IMR-90 (cell line): ENCODE measurements at regions of chr7 and their contacts with region 1.

Region 1: DNA sequence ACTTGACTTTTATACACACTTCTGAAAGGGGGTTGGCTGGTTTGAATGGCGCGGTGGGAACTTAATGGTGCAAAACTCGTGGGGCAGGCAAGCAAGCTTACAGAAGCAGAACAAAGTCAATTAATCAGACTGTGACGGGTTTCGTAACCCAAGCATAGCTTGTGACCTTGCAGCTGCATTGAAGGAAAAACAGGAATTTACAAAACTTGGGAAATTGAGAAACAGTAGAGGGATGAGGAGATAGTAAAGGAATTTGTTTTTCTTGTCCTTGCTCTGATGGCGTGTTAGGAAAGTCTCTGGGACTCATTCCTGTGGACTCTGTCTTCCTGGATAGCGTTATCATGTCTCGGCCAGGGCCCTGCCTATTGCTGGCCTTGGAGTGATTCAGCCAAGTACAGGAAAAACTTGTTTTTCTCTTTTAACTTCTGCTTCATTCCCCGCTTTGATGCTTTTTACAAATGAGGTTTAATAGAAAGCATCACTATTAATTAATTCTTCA is 220.0 kb upstream of the KCND2 start:
- DNase-seq: peak; percentile 99
- ATAC-seq: peak; percentile 89
- H3K4me3 ChIP-seq: no peak overlapping the region
- H3K27ac ChIP-seq: peak overlapping the region; percentile 99
- H3K4me1 ChIP-seq: peaks cover 23% of the 10 kb centered on the region
- H3K27me3 ChIP-seq: no peaks in the 10 kb centered on the region
- CTCF ChIP-seq: no peak
- POLR2A ChIP-seq: no peak; the same call in 1 of the 2 replicates
- RAD21 ChIP-seq: no peak

Region 2: GRCh38 chr7:119842786-119843185 is 210.1 kb before region 1 on chr7:
- CTCF ChIA-PET with region 1: no interaction called
- POLR2A ChIA-PET with region 1: no interaction called
- dilution Hi-C with region 1: no loop called
- in situ Hi-C with region 1: no loop called
- intact Hi-C with region 1: no loop called
- DNase-seq: no peak
- ATAC-seq: no peak
- H3K4me3 ChIP-seq: no peak overlapping the region
- H3K27ac ChIP-seq: no peak overlapping the region
- H3K4me1 ChIP-seq: no peaks in the 10 kb centered on the region
- H3K27me3 ChIP-seq: no peaks in the 10 kb centered on the region
- CTCF ChIP-seq: no peak
- POLR2A ChIP-seq: no peak
- RAD21 ChIP-seq: no peak

Region 3: DNA sequence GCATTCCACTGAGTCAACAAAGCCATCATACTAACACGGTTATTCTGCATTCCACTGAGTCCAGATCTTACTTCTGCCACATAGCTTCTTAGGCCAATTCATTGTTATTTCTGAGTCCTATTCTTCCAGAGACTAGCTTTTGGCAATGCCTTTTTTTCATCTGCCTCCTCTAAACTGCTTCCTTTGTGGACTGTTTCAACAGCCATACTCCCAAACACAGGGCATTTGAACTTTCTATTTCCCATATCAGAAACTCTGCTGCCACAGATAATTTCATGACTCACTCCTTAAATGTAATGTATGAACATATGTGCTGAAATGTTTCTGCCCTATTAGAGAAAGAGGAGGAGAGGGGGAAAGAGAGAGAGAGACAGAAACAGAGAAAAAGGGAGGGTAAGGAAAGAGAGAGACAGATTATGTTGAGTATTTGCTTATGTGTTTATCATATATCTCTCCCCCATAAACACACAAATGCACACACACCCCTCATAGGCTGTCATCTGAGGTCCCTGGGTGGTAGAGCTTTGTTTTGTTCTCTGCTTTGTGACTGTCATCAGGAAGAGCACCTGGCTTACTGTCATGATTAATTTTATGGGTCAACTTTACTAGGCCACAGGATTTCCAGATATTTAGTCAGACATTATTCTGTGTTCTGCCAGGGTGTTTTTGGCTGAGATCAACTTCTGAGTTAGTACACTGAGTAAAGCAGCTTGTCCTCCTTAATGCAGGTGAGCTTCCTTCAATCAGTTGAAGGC is 88.0 kb before region 1 on chr7:
- CTCF ChIA-PET with region 1: no interaction called
- POLR2A ChIA-PET with region 1: no interaction called
- dilution Hi-C with region 1: no loop called
- in situ Hi-C with region 1: no loop called
- intact Hi-C with region 1: loop called (anchors 10 kb)
- DNase-seq: peak; percentile 54
- ATAC-seq: peak; percentile 55
- H3K4me3 ChIP-seq: no peak overlapping the region
- H3K27ac ChIP-seq: no peak overlapping the region
- H3K4me1 ChIP-seq: peaks cover 8% of the 10 kb centered on the region; the same call in 1 of the 2 replicates
- H3K27me3 ChIP-seq: no peaks in the 10 kb centered on the region
- CTCF ChIP-seq: no peak
- POLR2A ChIP-seq: no peak
- RAD21 ChIP-seq: no peak

Region 4: GRCh38 chr7:120023494-120024167 is 29.3 kb before region 1 on chr7:
- CTCF ChIA-PET with region 1: no interaction called
- POLR2A ChIA-PET with region 1: no interaction called
- dilution Hi-C with region 1: no loop called
- in situ Hi-C with region 1: no loop called
- intact Hi-C with region 1: loop called (anchors 2 kb)
- DNase-seq: peak; percentile 85
- ATAC-seq: peak; percentile 64
- H3K4me3 ChIP-seq: no peak overlapping the region
- H3K27ac ChIP-seq: no peak overlapping the region
- H3K4me1 ChIP-seq: peaks cover 3% of the 10 kb centered on the region; the same call in 1 of the 2 replicates
- H3K27me3 ChIP-seq: no peaks in the 10 kb centered on the region
- CTCF ChIP-seq: no peak
- POLR2A ChIP-seq: no peak
- RAD21 ChIP-seq: no peak